ENCODE measurements at regions of chr16 and their contacts with region 1.

Region 1: GRCh38 chr16:81752225-81752875 is 26.7 kb upstream of the PLCG2 start:
- DNase-seq: no peak
- ATAC-seq: peak; percentile 33 to 53; a peak in 4 of 6 replicates
- H3K4me3 ChIP-seq: no peak overlapping the region
- H3K27ac ChIP-seq: no peak overlapping the region
- H3K4me1 ChIP-seq: no peaks in the 10 kb centered on the region
- CTCF ChIP-seq: no peak
- EP300 ChIP-seq: no peak
- POLR2A ChIP-seq: no peak
- RAD21 ChIP-seq: no peak

Region 2: DNA sequence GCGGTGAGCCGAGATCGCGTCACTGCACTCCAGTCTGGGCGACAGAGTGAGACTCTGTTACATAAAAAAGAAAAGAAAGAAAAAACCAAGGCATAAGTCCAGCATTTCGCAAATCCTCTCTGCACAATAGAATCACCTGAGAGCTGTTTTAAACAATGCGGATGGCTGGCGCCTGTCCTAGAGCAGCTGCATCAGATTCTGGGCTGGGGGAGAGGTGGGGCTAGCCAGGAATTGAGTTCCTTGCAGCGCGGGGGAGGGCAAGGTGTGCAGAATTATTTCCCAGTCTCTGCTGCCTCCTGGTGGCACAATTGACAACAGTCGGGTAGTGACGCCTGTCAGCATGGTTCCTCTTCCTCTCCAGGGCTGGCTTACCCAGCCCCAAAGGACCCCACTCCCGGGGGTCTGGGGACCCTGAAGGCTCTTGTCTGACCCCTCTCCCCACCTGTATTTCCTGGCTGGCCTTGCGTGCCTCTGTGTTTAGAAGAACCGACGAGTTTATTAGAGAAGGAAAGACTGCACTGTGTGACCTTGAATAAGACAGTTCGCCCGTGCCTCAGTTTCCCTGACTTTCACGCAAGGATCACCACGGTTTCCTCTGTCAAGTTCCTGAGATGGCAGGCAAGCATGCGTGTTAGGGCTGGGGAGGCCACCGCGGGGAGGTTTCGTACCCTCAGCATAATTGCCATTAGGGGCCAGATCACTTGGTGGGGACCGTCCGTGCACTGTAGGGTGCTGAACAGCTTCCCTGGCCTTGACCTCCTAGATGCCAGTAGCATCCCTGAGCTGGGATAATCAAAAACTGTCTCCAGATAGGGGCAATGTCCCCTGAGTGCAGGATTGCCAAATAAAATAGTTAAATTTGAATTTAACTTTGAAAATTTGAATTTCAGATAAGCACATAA is 14.2 kb before region 1 on chr16:
- CTCF ChIA-PET with region 1: interaction called, 13 read pairs
- POLR2A ChIA-PET with region 1: no interaction called
- DNase-seq: peak; percentile 86 to 87
- ATAC-seq: peak; percentile 93 to 94
- H3K4me3 ChIP-seq: peak overlapping the region; percentile 32; the same call in 2 of the 3 replicates
- H3K27ac ChIP-seq: peak overlapping the region; percentile 65 to 78
- H3K4me1 ChIP-seq: peaks cover 13% of the 10 kb centered on the region
- CTCF ChIP-seq: peak; percentile 94
- EP300 ChIP-seq: no peak
- POLR2A ChIP-seq: no peak
- RAD21 ChIP-seq: peak; percentile 98

Measured in A549 (cell line).